ENCODE measurements at regions of chr10 and their contacts with region 1.

Region 1: GRCh38 chr10:102678842-102679289 is 34.6 kb downstream of the TRIM8 start:
- DNase-seq: no peak
- H3K4me3 ChIP-seq: no peak overlapping the region
- H3K27me3 ChIP-seq: no peaks in the 10 kb centered on the region
- CTCF ChIP-seq: peak; percentile 86

Region 2: DNA sequence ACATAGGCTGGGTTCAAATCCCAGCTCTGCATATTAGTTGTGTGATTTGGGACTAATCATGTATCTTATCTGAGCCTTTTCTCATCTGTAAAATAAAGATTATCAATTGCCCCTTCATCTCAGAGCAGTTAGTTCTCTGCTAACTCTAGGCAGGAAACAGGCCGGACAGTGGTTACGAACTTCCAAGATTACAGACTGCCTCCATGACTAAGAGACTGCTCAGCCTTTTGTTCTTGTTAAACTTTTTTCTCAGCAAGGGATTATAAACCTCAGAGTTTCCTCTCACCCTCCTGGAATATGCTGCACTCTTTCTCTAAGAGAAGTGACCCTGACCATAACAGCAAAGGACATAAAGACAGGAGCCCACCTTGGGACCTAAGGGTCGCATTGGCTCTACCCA is 335.9 kb before region 1 on chr10:
- CTCF ChIA-PET with region 1: no interaction called
- POLR2A ChIA-PET with region 1: no interaction called
- DNase-seq: no peak
- H3K4me3 ChIP-seq: no peak overlapping the region
- H3K27me3 ChIP-seq: no peaks in the 10 kb centered on the region
- CTCF ChIP-seq: no peak

Region 3: DNA sequence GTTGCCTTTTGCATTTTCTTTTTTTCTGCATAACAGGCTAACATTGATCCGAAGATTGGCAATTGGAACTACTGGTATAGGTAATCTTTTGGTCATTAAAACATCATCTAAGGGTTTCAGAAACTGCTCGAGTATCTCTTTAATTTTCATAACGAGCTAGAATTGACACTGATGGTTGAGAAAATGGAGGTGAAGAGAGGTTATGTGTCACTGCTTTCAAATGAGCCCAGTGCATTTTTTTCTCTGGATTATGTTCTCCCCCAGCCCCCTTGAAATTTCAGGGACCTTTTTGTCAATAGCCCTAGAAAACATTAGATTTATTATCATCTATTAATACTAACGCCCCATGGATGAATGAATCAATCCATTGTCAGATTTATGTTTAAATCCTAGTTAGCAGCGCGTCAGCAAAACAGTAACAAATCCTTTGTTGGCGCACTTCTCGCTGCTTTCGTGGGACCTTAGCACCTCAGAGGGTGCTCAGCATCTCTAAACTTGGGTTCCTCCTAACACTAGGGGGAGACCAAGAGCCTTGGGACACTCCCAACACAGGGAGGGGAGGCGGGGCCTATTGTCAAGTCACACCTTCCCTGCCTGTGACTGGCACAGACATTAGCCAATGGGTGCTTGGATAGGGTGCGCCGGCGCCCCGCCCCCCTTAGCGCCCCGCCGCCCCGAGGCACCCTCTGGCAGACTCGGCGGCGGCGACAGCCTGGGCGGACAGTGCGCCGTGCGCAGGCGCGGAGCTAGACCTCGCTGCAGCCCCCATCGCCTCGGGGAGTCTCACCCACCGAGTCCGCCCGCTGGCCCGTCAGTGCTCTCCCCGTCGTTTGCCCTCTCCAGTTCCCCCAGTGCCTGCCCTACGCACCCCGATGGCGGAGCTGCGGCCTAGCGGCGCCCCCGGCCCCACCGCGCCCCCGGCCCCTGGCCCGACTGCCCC is 175.3 kb before region 1 on chr10 and contains the start of gene SUFU:
- CTCF ChIA-PET with region 1: interaction called, 12 read pairs
- POLR2A ChIA-PET with region 1: interaction called, 12 read pairs
- DNase-seq: peak; percentile 79
- H3K4me3 ChIP-seq: peak within 1 kb of the TSS; percentile 91
- H3K27me3 ChIP-seq: no peaks in the 10 kb centered on the region
- CTCF ChIP-seq: peak; percentile 94
- polyA plus RNA-seq, gene SUFU: 5.3 and 8.5 TPM in 2 replicates

Region 4: DNA sequence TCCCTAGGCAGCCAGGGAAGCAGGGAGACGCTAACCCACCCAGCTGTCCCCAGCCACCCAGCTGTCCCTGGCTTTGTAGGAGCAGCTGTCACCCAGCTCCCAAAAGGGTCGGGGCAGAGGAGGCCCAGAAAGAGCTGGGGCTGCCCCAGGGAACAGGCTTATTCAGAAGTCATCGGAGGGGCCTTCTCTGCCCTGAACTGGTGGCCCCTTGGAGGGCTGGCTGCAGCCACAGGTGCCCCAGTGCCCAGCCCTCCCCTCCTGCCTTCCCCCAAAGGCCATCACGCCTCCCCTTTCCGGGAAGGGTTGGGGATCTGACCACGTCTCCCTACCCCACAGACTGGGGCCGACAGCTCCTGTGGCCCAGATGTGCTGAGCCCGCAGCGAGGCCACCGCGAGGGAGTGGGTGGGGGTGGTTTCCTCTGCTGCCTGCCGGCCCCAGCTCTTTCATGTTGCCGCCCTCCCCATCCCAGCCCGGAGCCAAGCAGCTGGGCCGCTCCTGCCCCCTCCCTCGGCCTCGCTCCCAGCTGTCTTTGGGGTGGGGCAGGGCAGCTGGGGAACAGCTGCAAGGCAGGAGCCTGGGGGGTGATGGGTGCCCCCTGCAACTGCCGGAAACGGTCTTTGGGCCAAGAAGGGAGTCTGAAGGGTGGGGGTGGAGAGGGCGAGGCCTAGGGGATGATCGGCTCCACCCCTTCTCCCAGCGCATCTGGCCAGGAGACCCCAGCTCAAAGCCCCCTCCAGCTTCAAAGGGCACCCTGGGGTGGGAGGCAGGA is 17.8 kb before region 1 on chr10:
- CTCF ChIA-PET with region 1: interaction called, 7 read pairs
- POLR2A ChIA-PET with region 1: interaction called, 15 read pairs
- DNase-seq: peak; percentile 24
- H3K4me3 ChIP-seq: no peak overlapping the region
- H3K27me3 ChIP-seq: no peaks in the 10 kb centered on the region
- CTCF ChIP-seq: no peak

Region 5: DNA sequence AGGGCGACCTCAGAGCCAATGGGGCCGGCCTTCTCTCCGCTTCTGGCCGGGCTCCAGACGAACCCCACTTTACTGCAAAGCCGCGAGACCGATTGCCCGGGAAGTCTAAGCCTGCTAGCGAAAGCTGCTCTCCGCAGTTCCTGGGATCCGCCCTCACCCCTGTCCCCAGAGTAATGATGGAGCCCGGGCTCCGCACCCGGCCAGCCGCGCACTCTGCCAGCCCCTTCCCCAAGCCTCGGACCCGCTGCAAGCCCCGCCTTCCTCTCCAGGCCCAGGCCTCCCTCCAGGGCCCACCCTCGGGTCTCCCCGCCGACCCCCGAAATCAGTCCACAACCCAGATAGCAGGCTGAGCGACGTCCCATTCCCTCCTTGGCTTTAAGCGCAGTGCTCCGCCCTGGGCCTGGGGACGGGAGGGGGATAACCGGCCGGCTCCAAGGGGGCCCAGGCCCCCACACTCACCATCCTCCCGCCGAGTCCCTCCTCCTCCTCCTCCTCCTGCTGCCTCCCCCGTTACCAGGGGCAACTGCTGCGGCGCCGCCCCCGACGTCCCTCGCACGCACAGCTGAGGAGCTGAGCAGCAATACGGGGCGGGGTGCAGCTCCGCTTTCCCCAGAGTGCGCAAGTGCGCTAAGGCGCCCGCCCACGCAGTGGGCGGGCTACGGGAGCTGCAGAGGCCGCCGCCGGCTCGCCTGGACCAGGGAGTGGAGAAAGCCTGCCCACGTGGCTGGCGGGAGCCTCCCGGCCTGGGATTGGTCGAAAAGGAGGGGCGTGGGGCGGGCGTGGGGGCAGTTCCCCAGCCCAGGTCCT is 35.2 kb after region 1 on chr10 and contains the start of gene ARL3:
- CTCF ChIA-PET with region 1: interaction called, 72 read pairs
- POLR2A ChIA-PET with region 1: interaction called, 4 read pairs
- DNase-seq: peak; percentile 87
- H3K4me3 ChIP-seq: peak within 1 kb of the TSS; percentile 94
- H3K27me3 ChIP-seq: no peaks in the 10 kb centered on the region
- CTCF ChIP-seq: peak; percentile 67
- polyA plus RNA-seq, gene ARL3: 8.1 and 10.8 TPM in 2 replicates

Region 6: DNA sequence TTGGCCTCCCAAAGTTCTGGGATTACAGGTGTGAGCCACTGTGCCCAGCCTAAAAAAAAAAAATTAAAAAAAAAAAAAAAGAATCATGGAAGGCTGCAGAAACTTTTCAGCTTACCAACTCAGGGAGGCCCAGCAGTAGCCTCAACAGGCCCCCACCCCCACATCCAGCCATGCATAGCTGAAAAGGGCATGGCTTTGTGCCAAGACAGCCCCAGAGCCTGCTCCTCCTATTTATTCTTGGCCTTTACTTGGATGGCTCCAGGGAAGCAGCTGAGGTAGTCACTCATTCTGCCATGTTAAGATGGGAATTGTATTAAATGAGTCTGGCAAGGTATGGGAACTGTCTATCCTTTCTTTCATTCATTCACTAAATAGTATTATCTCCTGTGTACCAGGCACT is 225.5 kb after region 1 on chr10:
- CTCF ChIA-PET with region 1: interaction called, 11 read pairs
- POLR2A ChIA-PET with region 1: no interaction called
- DNase-seq: no peak
- H3K4me3 ChIP-seq: no peak overlapping the region
- H3K27me3 ChIP-seq: no peaks in the 10 kb centered on the region; the same call in 1 of the 2 replicates
- CTCF ChIP-seq: no peak